ENCODE measurements at regions of chr9 and their contacts with region 1.

Region 1: GRCh38 chr9:127519301-127520166 is 68.2 kb downstream of the LRSAM1 start:
- DNase-seq: peak; percentile 98 to 99 (median 98)
- H3K4me3 ChIP-seq: peak overlapping the region in 1 of 3 experiments; percentile 24
- H3K4me3 Mint-ChIP-seq: peak overlapping the region in 1 of 2 donors; percentile 6
- H3K27ac ChIP-seq: peak overlapping the region; percentile 78 to 87
- H3K27ac Mint-ChIP-seq: peak overlapping the region; percentile 90 to 96 (median 95)
- H3K4me1 ChIP-seq: peaks cover 37 to 39% of the 10 kb centered on the region in 2 donors
- H3K4me1 Mint-ChIP-seq: peaks cover 38% of the 10 kb centered on the region
- H3K27me3 ChIP-seq: no peaks in the 10 kb centered on the region
- H3K27me3 Mint-ChIP-seq: peaks cover 2 to 6% (median 3%) of the 10 kb centered on the region in 3 donors
- CTCF ChIP-seq: no peak

Region 2: GRCh38 chr9:127473501-127473900 is 46.0 kb before region 1 on chr9:
- intact Hi-C with region 1: no loop called
- DNase-seq: no peak
- H3K4me3 ChIP-seq: no peak overlapping the region
- H3K4me3 Mint-ChIP-seq: no peak overlapping the region
- H3K27ac ChIP-seq: no peak overlapping the region
- H3K27ac Mint-ChIP-seq: peak overlapping the region in 1 of 7 donors; percentile 24
- H3K4me1 ChIP-seq: no peaks in the 10 kb centered on the region
- H3K4me1 Mint-ChIP-seq: no peaks in the 10 kb centered on the region
- H3K27me3 ChIP-seq: no peaks in the 10 kb centered on the region
- H3K27me3 Mint-ChIP-seq: peaks cover 0 to 2% (median 0%) of the 10 kb centered on the region in 3 donors
- CTCF ChIP-seq: no peak

Region 3: GRCh38 chr9:127555768-127556397 is 36.3 kb after region 1 on chr9:
- intact Hi-C with region 1: loop called (anchors 5 kb)
- DNase-seq: peak; percentile 93 to 95 (median 94)
- H3K4me3 ChIP-seq: peak overlapping the region in 1 of 3 experiments; percentile 13
- H3K4me3 Mint-ChIP-seq: peak overlapping the region in 1 of 2 donors; percentile 33
- H3K27ac ChIP-seq: peak overlapping the region; percentile 40 to 80
- H3K27ac Mint-ChIP-seq: peak overlapping the region; percentile 71 to 94 (median 88)
- H3K4me1 ChIP-seq: peaks cover 59 to 68% of the 10 kb centered on the region in 2 donors
- H3K4me1 Mint-ChIP-seq: peaks cover 73% of the 10 kb centered on the region
- H3K27me3 ChIP-seq: no peaks in the 10 kb centered on the region
- H3K27me3 Mint-ChIP-seq: peaks cover 3 to 8% (median 5%) of the 10 kb centered on the region in 3 donors
- CTCF ChIP-seq: no peak

Region 4: GRCh38 chr9:127561619-127562500 is 42.3 kb after region 1 on chr9:
- intact Hi-C with region 1: loop called (anchors 5 kb)
- DNase-seq: peak; percentile 97 to 99 (median 98)
- H3K4me3 ChIP-seq: peak overlapping the region in 1 of 3 experiments; percentile 62
- H3K4me3 Mint-ChIP-seq: peak overlapping the region; percentile 63 to 80
- H3K27ac ChIP-seq: peak overlapping the region; percentile 75 to 94
- H3K27ac Mint-ChIP-seq: peak overlapping the region; percentile 95 to 100 (median 98)
- H3K4me1 ChIP-seq: peaks cover 93 to 98% of the 10 kb centered on the region in 2 donors
- H3K4me1 Mint-ChIP-seq: peaks cover 96% of the 10 kb centered on the region
- H3K27me3 ChIP-seq: no peaks in the 10 kb centered on the region
- H3K27me3 Mint-ChIP-seq: peaks cover 0 to 3% (median 3%) of the 10 kb centered on the region in 3 donors
- CTCF ChIP-seq: no peak

Measured in CD14-positive monocyte (primary cell).